Heart right ventricle (tissue), 16 donors: ENCODE measurements at regions of chr13 and their contacts with region 1.

Region 1: DNA sequence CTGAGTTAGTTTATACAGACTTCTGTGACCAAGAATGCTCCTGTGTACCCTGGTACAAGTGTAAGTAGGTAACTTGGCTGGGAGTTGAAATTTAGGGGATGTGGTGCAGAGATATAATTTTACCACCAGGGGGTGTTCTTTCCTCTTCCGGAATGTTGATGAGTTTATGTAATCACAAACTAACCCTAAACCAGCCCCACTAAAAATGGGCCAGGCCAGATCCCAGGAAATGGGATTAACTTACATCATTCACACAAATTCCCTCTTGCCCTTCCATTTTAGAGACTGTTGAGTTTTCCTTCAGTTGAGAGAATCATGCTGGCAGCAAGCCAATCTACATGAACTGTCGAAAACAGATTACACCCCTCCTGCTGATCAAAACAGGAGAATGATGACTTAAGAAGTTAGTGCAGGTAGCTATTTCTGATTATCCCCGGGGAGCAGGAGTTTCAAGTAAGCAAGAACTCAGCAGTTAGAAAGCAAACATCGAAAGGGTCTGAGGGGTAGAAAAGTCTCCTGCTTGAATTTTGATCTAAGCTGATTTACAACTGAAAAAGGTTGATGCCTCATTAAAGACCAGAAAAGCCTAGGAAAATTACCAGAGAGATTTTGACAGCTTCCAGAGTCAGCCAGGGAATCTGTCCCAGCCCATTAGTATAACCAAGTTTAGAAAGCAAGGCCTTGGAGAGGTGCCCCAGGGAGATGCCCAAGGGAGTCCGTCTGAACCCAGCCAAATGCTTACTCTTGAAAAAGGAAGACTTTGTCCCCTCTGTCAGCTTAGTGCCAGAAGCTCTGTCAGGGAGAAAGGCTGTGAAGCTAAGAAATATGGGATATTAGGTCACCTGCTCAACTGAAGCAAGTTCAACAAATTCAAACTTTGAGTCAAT is 32.3 kb upstream of the MED4 start:
- DNase-seq: peak; percentile 76 to 81
- ATAC-seq: peak; percentile 71 to 90 (median 82)
- H3K4me3 ChIP-seq: peak overlapping the region in 2 of 10 donors; percentile 6 to 14
- H3K27ac ChIP-seq: peak overlapping the region; percentile 73 to 94 (median 84)
- H3K4me1 ChIP-seq: peaks cover 13 to 56% (median 45%) of the 10 kb centered on the region in 9 donors
- H3K27me3 ChIP-seq: no peaks in the 10 kb centered on the region
- CTCF ChIP-seq: peak; percentile 64 to 84 (median 74)

Region 2: GRCh38 chr13:48009298-48009697 is 117.9 kb before region 1 on chr13:
- intact Hi-C with region 1: no loop called
- DNase-seq: no peak
- ATAC-seq: peak in 1 of 8 donors; percentile 33
- H3K4me3 ChIP-seq: no peak overlapping the region
- H3K27ac ChIP-seq: peak overlapping the region in 1 of 10 donors; percentile 21
- H3K4me1 ChIP-seq: peaks cover 0 to 9% (median 0%) of the 10 kb centered on the region in 9 donors
- H3K27me3 ChIP-seq: no peaks in the 10 kb centered on the region
- CTCF ChIP-seq: no peak

Region 3: DNA sequence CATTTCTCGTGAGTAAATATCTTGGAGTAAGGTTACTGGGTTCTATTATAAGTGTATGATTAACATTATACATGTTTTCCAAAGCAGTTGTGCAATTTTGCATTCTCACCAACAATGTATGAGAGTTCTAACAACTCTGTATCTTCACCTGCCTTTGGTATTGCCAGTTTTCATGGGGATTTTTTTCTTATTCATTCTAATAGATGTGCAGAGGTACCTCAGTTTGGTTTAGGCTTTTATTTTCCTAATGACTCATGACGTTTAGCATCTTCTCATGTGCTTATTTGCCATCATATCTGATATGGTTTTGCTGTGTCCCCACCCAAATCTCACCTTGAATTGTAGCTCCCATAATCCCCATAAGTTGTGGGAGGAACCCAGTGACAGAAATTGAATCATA is 97.3 kb before region 1 on chr13:
- intact Hi-C with region 1: no loop called
- DNase-seq: no peak
- ATAC-seq: no peak
- H3K4me3 ChIP-seq: no peak overlapping the region
- H3K27ac ChIP-seq: no peak overlapping the region
- H3K4me1 ChIP-seq: no peaks in the 10 kb centered on the region
- H3K27me3 ChIP-seq: no peaks in the 10 kb centered on the region
- CTCF ChIP-seq: no peak

Region 4: DNA sequence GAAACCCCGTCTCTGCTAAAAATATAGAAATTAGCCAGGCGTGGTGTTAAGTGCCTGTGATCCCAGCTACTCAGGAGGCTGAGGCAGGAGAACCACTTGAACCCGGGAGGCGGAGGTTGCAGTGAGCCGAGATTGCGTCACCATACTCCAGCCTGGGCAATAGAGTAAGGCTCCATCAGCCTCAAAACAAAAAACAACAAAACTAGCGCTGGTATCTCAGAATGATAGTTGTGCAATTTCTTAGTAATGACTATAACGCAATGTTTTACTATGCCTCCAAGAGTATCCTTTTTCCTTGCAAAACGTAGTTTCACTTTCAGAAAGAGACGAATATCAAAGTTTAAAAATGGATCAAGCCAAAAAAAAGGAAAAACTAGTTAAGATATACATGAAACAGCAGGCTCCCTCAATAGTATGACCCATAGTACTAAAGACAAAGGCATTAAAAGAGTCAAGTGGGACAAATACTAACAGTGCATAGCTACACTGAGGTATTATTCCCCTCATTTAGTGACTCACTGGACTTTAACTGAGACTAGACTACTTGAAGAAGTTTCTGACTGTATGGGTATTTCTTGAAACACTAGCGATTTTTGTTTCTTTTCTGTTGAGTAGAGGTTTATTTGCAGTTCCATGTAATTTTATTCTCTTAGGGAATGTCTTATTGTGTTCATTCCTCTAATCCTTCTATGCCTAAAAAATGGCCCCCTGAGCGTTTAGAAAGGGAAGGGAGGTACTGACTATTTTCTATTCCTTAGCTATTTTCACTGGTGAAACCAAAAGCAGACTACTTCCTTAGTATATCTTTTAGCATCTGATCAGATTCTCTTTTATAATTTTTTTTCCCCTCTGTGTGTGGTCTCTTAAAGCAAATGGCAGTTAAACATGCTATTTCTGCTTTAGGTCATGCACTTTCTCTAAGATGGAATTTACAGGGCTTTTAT is 95.4 kb after region 1 on chr13:
- intact Hi-C with region 1: loop called in 1 of 10 experiments (anchors 10 kb)
- DNase-seq: peak in 1 of 2 donors; percentile 33
- ATAC-seq: peak; percentile 64 to 90 (median 81)
- H3K4me3 ChIP-seq: peak overlapping the region in 9 of 10 donors; percentile 14 to 52 (median 44)
- H3K27ac ChIP-seq: peak overlapping the region; percentile 65 to 90 (median 76)
- H3K4me1 ChIP-seq: peaks cover 0 to 41% (median 19%) of the 10 kb centered on the region in 9 donors
- H3K27me3 ChIP-seq: no peaks in the 10 kb centered on the region
- CTCF ChIP-seq: no peak

Region 5: DNA sequence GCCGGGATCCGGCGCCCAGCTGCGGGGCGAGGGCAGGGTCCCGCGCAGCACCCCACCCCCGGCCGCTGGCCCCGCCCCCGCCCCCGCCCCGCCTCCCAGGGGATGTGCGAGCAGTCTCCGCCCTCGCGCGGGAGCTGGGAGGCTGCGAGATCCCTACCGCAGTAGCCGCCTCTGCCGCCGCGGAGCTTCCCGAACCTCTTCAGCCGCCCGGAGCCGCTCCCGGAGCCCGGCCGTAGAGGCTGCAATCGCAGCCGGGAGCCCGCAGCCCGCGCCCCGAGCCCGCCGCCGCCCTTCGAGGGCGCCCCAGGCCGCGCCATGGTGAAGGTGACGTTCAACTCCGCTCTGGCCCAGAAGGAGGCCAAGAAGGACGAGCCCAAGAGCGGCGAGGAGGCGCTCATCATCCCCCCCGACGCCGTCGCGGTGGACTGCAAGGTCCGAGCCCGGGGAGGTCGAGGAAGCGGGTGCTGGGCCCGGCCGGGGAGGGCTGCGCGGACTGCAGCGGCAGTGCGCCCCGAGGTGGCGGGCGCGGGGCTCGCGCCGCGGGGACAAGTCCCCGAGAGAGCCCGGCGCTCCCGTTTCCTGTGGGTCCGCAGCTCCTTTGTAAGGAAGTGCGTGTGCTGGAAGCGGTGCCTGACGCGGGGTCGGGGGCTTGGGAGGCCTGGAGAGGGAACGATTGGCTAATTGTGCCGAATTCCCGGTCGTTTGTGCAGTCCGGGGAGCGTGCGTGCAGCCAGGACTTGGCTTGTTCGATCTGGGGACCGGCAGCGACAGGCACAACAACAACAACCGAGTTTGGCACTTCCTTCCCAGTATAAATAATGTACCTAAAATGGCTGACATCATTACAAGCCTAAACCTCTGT is 106.1 kb after region 1 on chr13 and contains the start of gene ITM2B:
- intact Hi-C with region 1: loop called in 9 of 10 experiments (anchors 1 to 10 kb)
- DNase-seq: peak; percentile 80 to 86
- ATAC-seq: peak; percentile 85 to 96 (median 93)
- H3K4me3 ChIP-seq: peak within 1 kb of the TSS; percentile 86 to 100 (median 97)
- H3K27ac ChIP-seq: peak within 1 kb of the TSS; percentile 98 to 100 (median 100)
- H3K4me1 ChIP-seq: peaks cover 0 to 55% (median 44%) of the 10 kb centered on the region in 9 donors
- H3K27me3 ChIP-seq: no peaks in the 10 kb centered on the region
- CTCF ChIP-seq: peak in 8 of 9 donors; percentile 25 to 67 (median 53)
- total RNA-seq, gene ITM2B: 434 to 636 (median 511) TPM

Region 6: GRCh38 chr13:48303359-48304142 is 176.4 kb after region 1 on chr13 and contains the start of gene RB1:
- intact Hi-C with region 1: loop called in 5 of 10 experiments (anchors 2 to 10 kb)
- DNase-seq: peak; percentile 94
- ATAC-seq: peak; percentile 94 to 98 (median 97)
- H3K4me3 ChIP-seq: peak within 1 kb of the TSS; percentile 69 to 99 (median 90)
- H3K27ac ChIP-seq: peak within 1 kb of the TSS; percentile 97 to 100 (median 100)
- H3K4me1 ChIP-seq: peaks cover 0 to 44% (median 33%) of the 10 kb centered on the region in 9 donors
- H3K27me3 ChIP-seq: no peaks in the 10 kb centered on the region
- CTCF ChIP-seq: no peak
- total RNA-seq, gene RB1: 22.3 to 42.0 (median 26.8) TPM

Region 7: GRCh38 chr13:48505597-48506091 is 378.5 kb after region 1 on chr13:
- intact Hi-C with region 1: loop called in 1 of 10 experiments (anchors 10 kb)
- DNase-seq: peak in 1 of 2 donors; percentile 68
- ATAC-seq: peak; percentile 57 to 89 (median 84)
- H3K4me3 ChIP-seq: peak overlapping the region in 5 of 10 donors; percentile 6 to 29 (median 20)
- H3K27ac ChIP-seq: peak overlapping the region; percentile 47 to 92 (median 75)
- H3K4me1 ChIP-seq: peaks cover 0 to 77% (median 34%) of the 10 kb centered on the region in 9 donors
- H3K27me3 ChIP-seq: no peaks in the 10 kb centered on the region
- CTCF ChIP-seq: no peak

Region 8: DNA sequence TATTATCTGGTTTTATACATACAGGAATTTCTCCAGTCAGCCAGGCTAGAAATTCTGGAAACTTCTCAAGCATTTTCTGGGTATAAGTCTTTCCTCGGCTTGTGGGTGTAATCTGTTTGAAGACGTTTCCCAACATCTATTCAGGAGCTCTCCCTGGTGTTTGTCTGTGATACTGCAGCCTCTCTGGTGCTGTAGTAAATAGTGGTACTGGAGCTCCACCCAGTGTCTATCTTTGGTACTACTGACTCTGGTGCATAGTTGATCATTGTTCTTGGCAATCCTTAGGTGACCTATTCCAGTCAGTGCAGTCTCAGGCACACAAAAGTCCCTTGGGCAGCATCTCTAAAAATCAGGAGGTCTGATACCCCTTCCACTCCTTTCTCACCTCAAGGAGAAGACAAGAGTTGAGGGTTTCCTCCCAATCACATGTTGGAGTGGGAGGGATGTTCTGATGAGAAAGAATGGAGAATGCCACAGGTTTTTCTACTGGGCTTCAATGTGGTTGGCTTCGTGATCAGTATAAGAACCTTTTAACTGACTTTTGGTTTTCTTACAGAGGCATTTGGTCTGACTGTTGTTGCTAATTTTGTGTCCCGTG is 642.0 kb after region 1 on chr13:
- intact Hi-C with region 1: loop called in 1 of 10 experiments (anchors 5 kb)
- DNase-seq: peak in 1 of 2 donors; percentile 92
- ATAC-seq: peak; percentile 83 to 94 (median 91)
- H3K4me3 ChIP-seq: no peak overlapping the region
- H3K27ac ChIP-seq: peak overlapping the region in 1 of 10 donors; percentile 29
- H3K4me1 ChIP-seq: peaks cover 0 to 9% (median 0%) of the 10 kb centered on the region in 9 donors
- H3K27me3 ChIP-seq: no peaks in the 10 kb centered on the region
- CTCF ChIP-seq: peak; percentile 96 to 100 (median 99)